ENCODE measurements at regions of chr12 and their contacts with region 1.

Region 1: GRCh38 chr12:88529531-88530488 is 50.5 kb downstream of the KITLG start:
- DNase-seq: no peak
- H3K27ac ChIP-seq: no peak overlapping the region
- CTCF ChIP-seq: no peak

Region 2: GRCh38 chr12:88411689-88412088 is 118.1 kb before region 1 on chr12:
- CTCF ChIA-PET with region 1: no interaction called
- POLR2A ChIA-PET with region 1: interaction called, 10 read pairs
- DNase-seq: no peak
- H3K27ac ChIP-seq: no peak overlapping the region
- CTCF ChIP-seq: no peak